Psoas muscle (tissue), 8 donors: ENCODE measurements at regions of chr6 and their contacts with region 1.

Region 1: GRCh38 chr6:79536954-79537747 is at the start of gene LCA5:
- DNase-seq: peak; percentile 89 to 94
- ATAC-seq: peak; percentile 98 to 99 (median 98)
- H3K4me3 ChIP-seq: peak within 1 kb of the TSS; percentile 79
- H3K27ac ChIP-seq: peak within 1 kb of the TSS; percentile 91
- H3K4me1 ChIP-seq: peaks cover 6% of the 10 kb centered on the region
- H3K27me3 ChIP-seq: no peaks in the 10 kb centered on the region
- CTCF ChIP-seq: no peak
- total RNA-seq, gene LCA5: 0.91 to 2.7 (median 1.6) TPM

Region 2: DNA sequence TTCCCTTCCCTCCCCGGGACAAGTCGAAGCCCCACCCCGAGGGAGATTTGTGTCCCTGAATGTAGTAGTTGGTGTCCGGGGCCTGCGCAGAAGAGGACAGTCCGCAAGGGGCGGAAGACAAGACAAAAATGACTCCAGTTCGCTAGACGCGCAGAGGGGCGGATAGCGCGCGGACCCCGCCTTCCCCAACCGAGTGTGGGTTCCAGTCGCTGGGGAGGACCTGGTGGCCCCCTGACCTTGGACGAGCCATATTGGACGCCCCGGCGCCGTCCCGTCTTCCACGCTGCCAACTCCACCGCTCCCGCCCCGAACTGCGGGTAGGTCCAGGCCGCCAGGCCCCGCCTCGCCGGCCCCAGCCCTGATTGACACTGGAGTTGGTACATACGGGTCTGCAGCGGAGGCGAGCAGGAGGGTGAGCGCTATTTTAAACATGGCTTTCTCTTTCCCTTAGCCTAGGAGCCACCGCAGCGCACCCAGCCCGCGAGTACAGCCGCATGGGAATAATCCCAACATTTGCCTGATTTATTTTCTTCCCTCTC is 303.5 kb before region 1 on chr6:
- intact Hi-C with region 1: loop called (anchors 5 to 10 kb)
- DNase-seq: peak; percentile 92 to 95
- ATAC-seq: peak; percentile 95 to 96 (median 96)
- H3K4me3 ChIP-seq: peak overlapping the region; percentile 87
- H3K27ac ChIP-seq: peak overlapping the region; percentile 83
- H3K4me1 ChIP-seq: peaks cover 21% of the 10 kb centered on the region
- H3K27me3 ChIP-seq: no peaks in the 10 kb centered on the region
- CTCF ChIP-seq: peak; percentile 46